ENCODE measurements at regions of chr1 and their contacts with region 1.

Region 1: GRCh38 chr1:81681586-81682266 is 119.0 kb upstream of the ADGRL2 start:
- DNase-seq: peak; percentile 43
- H3K4me3 Mint-ChIP-seq: peak overlapping the region; percentile 42
- H3K27ac Mint-ChIP-seq: peak overlapping the region; percentile 95
- H3K4me1 Mint-ChIP-seq: peaks cover 42% of the 10 kb centered on the region
- H3K27me3 Mint-ChIP-seq: no peaks in the 10 kb centered on the region
- CTCF ChIP-seq: no peak

Region 2: DNA sequence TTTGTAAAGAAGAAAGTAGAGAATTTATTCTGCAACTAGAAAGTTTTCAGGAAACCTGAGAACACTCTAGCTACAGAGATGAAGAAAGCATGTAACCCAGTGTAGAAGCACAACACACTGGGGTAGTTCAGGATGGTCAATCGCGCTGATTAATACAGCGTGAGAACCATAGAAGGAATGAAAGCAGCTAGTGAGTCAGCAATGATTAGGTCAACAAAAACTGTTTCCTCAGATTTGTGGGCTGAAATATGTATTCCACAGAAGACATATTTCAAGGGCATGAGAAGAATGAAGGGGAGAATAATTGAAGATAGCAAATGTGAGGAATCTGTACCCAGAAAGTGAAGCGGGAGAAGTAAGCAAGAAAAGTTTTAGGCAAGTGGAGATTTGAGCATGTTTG is 21.2 kb after region 1 on chr1:
- CTCF ChIA-PET with region 1: no interaction called
- intact Hi-C with region 1: loop called (anchors 2 kb)
- DNase-seq: peak; percentile 28
- H3K4me3 Mint-ChIP-seq: peak overlapping the region; percentile 50
- H3K27ac Mint-ChIP-seq: peak overlapping the region; percentile 83
- H3K4me1 Mint-ChIP-seq: peaks cover 69% of the 10 kb centered on the region
- H3K27me3 Mint-ChIP-seq: no peaks in the 10 kb centered on the region
- CTCF ChIP-seq: no peak

Region 3: GRCh38 chr1:81731989-81732388 is 50.3 kb after region 1 on chr1:
- CTCF ChIA-PET with region 1: no interaction called
- intact Hi-C with region 1: loop called (anchors 2 kb)
- DNase-seq: no peak
- H3K4me3 Mint-ChIP-seq: peak overlapping the region; percentile 52
- H3K27ac Mint-ChIP-seq: peak overlapping the region; percentile 88
- H3K4me1 Mint-ChIP-seq: peaks cover 37% of the 10 kb centered on the region
- H3K27me3 Mint-ChIP-seq: no peaks in the 10 kb centered on the region
- CTCF ChIP-seq: no peak

Region 4: GRCh38 chr1:81800695-81801650 is 119.2 kb after region 1 on chr1 and contains the start of gene ADGRL2:
- CTCF ChIA-PET with region 1: no interaction called
- intact Hi-C with region 1: loop called (anchors 5 kb)
- DNase-seq: peak; percentile 77
- H3K4me3 Mint-ChIP-seq: peak within 1 kb of the TSS; percentile 91
- H3K27ac Mint-ChIP-seq: peak within 1 kb of the TSS; percentile 61
- H3K4me1 Mint-ChIP-seq: peaks cover 6% of the 10 kb centered on the region
- H3K27me3 Mint-ChIP-seq: no peaks in the 10 kb centered on the region
- CTCF ChIP-seq: no peak
- total RNA-seq, gene ADGRL2: 58.8 and 72.3 TPM in 2 replicates

Measured in Calu3 (cell line).